T-cell (primary cell): ENCODE measurements at regions of chr13 and their contacts with region 1.

Region 1: GRCh38 chr13:43074824-43075510 is 51.6 kb downstream of the DNAJC15 start:
- DNase-seq: peak in 1 of 35 experiments; percentile 21
- ATAC-seq: peak in 3 of 4 experiments; percentile 37 to 55 (median 40)
- H3K4me3 ChIP-seq: no peak overlapping the region
- H3K4me3 Mint-ChIP-seq: peak overlapping the region; percentile 31 to 64 (median 56)
- H3K27ac ChIP-seq: no peak overlapping the region
- H3K27ac Mint-ChIP-seq: peak overlapping the region in 1 of 2 donors; percentile 79
- H3K4me1 ChIP-seq: peaks cover 5 to 6% of the 10 kb centered on the region in 2 experiments
- H3K4me1 Mint-ChIP-seq: peaks cover 35 to 63% (median 55%) of the 10 kb centered on the region in 3 donors
- H3K27me3 ChIP-seq: no peaks in the 10 kb centered on the region
- H3K27me3 Mint-ChIP-seq: no peaks in the 10 kb centered on the region

Region 2: DNA sequence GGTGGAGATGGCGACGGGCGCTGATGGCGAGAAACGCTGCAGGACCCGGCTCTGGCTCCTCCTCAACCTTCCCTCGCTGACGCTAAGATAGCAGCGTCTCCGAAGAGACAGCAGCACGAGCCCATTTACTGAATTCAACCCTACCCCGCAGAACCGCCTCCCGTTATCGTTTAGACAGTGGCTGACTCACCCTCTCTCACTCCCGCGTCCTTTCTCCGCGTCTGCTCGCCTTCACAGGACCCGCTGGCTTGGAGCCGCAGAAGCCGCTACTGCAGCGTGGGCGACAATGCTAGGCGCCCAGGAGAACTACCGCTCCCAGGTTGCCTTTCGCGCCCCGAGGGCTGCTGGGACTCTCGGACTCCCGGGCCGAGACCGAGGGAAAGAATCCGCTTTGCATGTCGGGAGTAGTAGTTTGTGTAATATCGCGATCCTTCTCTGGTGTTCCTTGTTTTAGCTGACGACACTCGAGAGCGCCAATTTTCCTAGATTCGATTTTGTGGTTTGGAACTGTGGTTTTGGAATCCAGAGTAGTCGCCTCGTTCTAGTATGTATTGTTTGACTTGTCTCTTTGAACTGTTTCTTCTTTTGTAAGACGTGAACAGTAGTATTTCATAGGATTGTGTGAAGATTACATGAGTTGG is 1942.3 kb before region 1 on chr13 and contains the start of gene KBTBD6:
- CTCF ChIA-PET with region 1: no interaction called
- POLR2A ChIA-PET with region 1: interaction called in 1 of 2 experiments, 14 read pairs
- DNase-seq: peak; percentile 80 to 94 (median 87)
- ATAC-seq: peak; percentile 98 to 99 (median 98)
- H3K4me3 ChIP-seq: peak within 1 kb of the TSS; percentile 64 to 84
- H3K4me3 Mint-ChIP-seq: peak within 1 kb of the TSS; percentile 96 to 99 (median 98)
- H3K27ac ChIP-seq: peak within 1 kb of the TSS; percentile 66
- H3K27ac Mint-ChIP-seq: peak within 1 kb of the TSS; percentile 92 to 94
- H3K4me1 ChIP-seq: peaks cover 24 to 33% of the 10 kb centered on the region in 2 experiments
- H3K4me1 Mint-ChIP-seq: peaks cover 55 to 57% (median 56%) of the 10 kb centered on the region in 3 donors
- H3K27me3 ChIP-seq: no peaks in the 10 kb centered on the region
- H3K27me3 Mint-ChIP-seq: no peaks in the 10 kb centered on the region
- total RNA-seq, gene KBTBD6: 3.0 to 8.8 (median 7.8) TPM

Region 3: DNA sequence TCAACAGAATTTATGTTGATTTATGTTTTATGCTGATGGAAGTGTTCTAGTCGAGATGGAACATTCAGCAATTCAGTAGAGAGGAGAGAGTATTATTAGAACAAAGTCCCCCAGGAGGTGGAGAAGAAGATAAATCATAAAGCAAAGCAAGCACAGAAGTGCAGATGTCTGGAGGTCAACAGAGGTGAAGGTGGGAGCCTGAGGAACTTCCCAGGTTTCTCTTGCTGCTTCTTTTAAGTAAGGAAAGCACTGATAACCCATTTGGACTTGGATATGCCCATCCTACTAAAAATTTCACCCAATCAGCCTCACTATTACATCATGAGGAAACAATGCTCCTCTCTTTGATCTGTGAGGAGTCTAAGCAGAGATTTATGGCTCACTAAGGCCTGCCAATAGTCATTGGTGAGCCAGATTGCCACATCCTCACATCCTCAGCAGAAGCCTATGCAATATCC is 181.7 kb before region 1 on chr13:
- CTCF ChIA-PET with region 1: no interaction called
- POLR2A ChIA-PET with region 1: no interaction called
- DNase-seq: no peak
- ATAC-seq: no peak
- H3K4me3 ChIP-seq: no peak overlapping the region
- H3K4me3 Mint-ChIP-seq: no peak overlapping the region
- H3K27ac ChIP-seq: no peak overlapping the region
- H3K27ac Mint-ChIP-seq: no peak overlapping the region
- H3K4me1 ChIP-seq: no peaks in the 10 kb centered on the region
- H3K4me1 Mint-ChIP-seq: peaks cover 0 to 6% (median 0%) of the 10 kb centered on the region in 3 donors
- H3K27me3 ChIP-seq: no peaks in the 10 kb centered on the region
- H3K27me3 Mint-ChIP-seq: no peaks in the 10 kb centered on the region

Region 4: GRCh38 chr13:44364348-44365049 is 1289.5 kb after region 1 on chr13:
- CTCF ChIA-PET with region 1: interaction called in 1 of 2 experiments, 13 read pairs
- POLR2A ChIA-PET with region 1: no interaction called
- DNase-seq: no peak
- ATAC-seq: no peak
- H3K4me3 ChIP-seq: no peak overlapping the region
- H3K4me3 Mint-ChIP-seq: no peak overlapping the region
- H3K27ac ChIP-seq: no peak overlapping the region
- H3K27ac Mint-ChIP-seq: no peak overlapping the region
- H3K4me1 ChIP-seq: no peaks in the 10 kb centered on the region
- H3K4me1 Mint-ChIP-seq: no peaks in the 10 kb centered on the region
- H3K27me3 ChIP-seq: no peaks in the 10 kb centered on the region
- H3K27me3 Mint-ChIP-seq: peaks cover 6 to 16% of the 10 kb centered on the region in 2 donors

Region 5: GRCh38 chr13:44388427-44389059 is 1313.6 kb after region 1 on chr13:
- CTCF ChIA-PET with region 1: no interaction called
- POLR2A ChIA-PET with region 1: no interaction called
- DNase-seq: no peak
- ATAC-seq: no peak
- H3K4me3 ChIP-seq: no peak overlapping the region
- H3K4me3 Mint-ChIP-seq: no peak overlapping the region
- H3K27ac ChIP-seq: no peak overlapping the region
- H3K27ac Mint-ChIP-seq: no peak overlapping the region
- H3K4me1 ChIP-seq: no peaks in the 10 kb centered on the region
- H3K4me1 Mint-ChIP-seq: peaks cover 0 to 2% (median 0%) of the 10 kb centered on the region in 3 donors
- H3K27me3 ChIP-seq: no peaks in the 10 kb centered on the region
- H3K27me3 Mint-ChIP-seq: peaks cover 0 to 11% of the 10 kb centered on the region in 2 donors